GM10248 (cell line): ENCODE measurements at regions of chr13 and their contacts with region 1.

Region 1: DNA sequence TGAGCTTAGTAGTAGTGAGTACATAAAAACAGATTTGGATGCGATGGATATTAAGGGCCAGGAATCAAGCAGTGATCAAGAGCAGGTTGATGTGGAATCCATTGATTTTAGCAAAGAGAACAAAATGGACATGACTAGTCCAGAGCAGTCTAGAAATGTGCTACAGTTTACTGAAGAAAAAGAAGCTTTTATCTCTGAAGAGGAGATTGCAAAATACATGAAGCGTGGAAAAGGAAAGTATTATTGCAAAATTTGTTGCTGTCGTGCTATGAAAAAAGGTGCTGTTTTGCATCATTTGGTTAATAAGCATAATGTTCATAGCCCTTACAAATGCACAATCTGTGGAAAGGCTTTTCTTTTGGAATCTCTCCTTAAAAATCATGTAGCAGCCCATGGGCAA is 11.4 kb downstream of the CHAMP1 start:
- DNase-seq: no peak
- CTCF ChIP-seq: no peak

Region 2: GRCh38 chr13:114339857-114340534 is 14.3 kb after region 1 on chr13:
- CTCF ChIA-PET with region 1: interaction called, 13 read pairs
- POLR2A ChIA-PET with region 1: no interaction called
- DNase-seq: no peak
- CTCF ChIP-seq: peak; percentile 66